ENCODE measurements at regions of chr1 and their contacts with region 1.

Region 1: DNA sequence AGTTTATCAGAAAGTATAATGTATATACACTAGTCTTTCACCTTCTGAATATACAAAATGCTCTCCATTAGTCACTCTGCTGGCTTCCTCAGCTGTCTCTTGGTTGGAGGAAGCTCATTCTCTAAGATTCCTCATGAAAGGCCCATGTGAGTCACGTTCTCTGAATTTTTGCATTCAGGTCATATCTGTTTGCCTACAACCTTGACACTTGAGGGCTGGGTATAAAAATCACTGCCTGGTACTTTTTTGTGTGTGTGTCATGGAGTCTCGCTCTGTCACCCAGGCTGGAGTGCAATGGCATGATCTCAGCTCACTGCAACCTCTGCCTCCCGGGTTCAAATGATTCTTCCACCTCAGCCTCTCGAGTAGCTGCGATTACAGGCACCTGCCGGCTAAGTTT is 2.8 kb upstream of the GALNT2 start:
- DNase-seq: no peak
- H3K4me3 ChIP-seq: no peak overlapping the region
- H3K27ac ChIP-seq: no peak overlapping the region
- H3K4me1 ChIP-seq: no peaks in the 10 kb centered on the region
- H3K27me3 ChIP-seq: no peaks in the 10 kb centered on the region
- CTCF ChIP-seq: no peak
- POLR2A ChIP-seq: no peak

Region 2: GRCh38 chr1:229913489-229913888 is 150.8 kb before region 1 on chr1:
- intact Hi-C with region 1: loop called (anchors 5 kb)
- DNase-seq: no peak
- H3K4me3 ChIP-seq: no peak overlapping the region
- H3K27ac ChIP-seq: no peak overlapping the region
- H3K4me1 ChIP-seq: no peaks in the 10 kb centered on the region
- H3K27me3 ChIP-seq: peaks cover 0 to 6% of the 10 kb centered on the region in 2 donors
- CTCF ChIP-seq: no peak
- POLR2A ChIP-seq: no peak

Region 3: DNA sequence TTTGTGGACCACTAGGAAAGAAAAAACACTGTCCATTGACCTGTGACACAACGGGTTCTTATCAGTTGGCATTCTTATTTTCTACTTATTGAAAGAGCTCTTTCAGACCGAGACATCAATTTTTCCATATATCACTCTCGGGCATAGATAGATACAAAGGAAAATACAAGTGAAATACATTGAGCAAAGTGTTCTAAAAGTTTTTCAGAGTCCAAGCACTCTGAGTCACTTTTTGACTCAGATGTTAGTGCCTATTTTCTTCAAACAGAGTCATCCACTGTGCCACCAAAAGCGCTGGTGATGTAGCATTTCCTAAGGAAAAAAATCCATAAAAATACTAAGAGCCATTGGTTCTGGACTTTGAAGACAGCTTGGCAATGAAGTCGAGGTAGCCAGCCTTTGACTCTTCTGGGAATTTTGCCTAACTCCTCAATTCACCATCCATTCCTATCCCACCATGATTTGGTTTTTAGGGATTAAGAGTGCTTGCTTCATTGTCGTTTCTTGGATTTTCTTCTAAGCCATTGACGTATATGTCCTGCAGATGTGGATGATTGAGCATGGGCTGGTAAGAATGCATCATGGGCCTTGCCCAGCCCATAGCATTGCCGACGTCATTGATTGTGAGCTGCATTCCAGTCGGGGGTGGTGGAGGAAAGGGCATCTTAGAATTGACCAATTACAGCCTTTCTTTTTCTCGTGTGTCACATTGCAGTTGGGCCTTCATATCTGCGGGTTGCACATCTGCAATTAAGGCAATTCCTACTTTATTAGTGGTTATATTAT is 13.3 kb after region 1 on chr1:
- intact Hi-C with region 1: no loop called
- DNase-seq: no peak
- H3K4me3 ChIP-seq: no peak overlapping the region
- H3K27ac ChIP-seq: no peak overlapping the region
- H3K4me1 ChIP-seq: no peaks in the 10 kb centered on the region
- H3K27me3 ChIP-seq: no peaks in the 10 kb centered on the region
- CTCF ChIP-seq: no peak
- POLR2A ChIP-seq: no peak

Measured in breast epithelium (tissue), 4 donors.